ENCODE measurements at regions of chr6 and their contacts with region 1.

Region 1: DNA sequence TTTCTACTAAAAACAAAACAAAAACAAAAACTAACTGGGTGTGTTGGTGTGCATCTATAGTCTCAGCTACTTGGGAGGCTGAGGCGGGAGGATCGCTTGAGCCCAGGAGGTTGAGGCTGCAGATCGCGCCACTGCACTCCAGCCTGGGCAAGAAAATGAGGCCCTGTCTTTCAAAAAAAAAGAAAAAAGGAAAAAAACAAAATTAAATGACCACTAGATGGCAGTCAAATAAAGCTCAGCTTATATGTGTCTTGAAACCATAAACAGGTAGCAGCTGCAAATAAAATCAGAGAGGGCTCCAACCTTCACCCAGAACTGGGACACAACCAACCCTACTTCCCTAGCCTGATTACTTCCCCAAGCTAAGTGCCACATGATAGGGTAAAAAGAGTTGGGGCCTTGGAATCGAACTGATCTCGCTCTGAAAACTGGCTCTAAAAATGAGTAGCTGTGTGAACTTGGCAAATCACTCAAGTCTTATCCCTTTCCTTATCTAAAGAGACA is 67.1 kb upstream of the ADGRF4 start:
- ATAC-seq: peak in 3 of 8 experiments; percentile 5 to 9 (median 7)
- H3K4me3 ChIP-seq: no peak overlapping the region
- H3K27ac ChIP-seq: no peak overlapping the region
- H3K4me1 ChIP-seq: no peaks in the 10 kb centered on the region

Region 2: GRCh38 chr6:47302043-47302442 is 329.3 kb before region 1 on chr6:
- in situ Hi-C with region 1: no loop called
- ATAC-seq: no peak
- H3K4me3 ChIP-seq: no peak overlapping the region
- H3K27ac ChIP-seq: no peak overlapping the region
- H3K4me1 ChIP-seq: peaks cover 5 to 7% of the 10 kb centered on the region in 2 donors

Region 3: DNA sequence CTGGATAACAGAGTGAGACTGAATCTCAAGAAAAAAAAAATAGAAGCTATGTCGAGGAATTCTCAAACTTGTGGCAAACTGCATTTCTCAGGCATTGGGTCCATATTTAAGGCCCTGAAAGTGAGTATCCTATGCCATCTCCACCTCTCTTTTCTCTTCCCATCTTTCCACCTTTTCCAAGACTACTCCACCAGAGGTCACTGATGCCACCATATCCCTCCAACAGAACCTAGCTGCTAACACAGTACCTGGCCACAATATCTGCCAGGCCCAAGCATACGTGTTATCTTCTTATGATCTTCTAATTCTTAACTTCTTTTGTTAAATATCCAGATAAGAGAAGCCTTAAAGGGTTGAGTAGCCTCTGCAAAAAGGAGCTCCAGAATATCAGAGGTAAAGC is 58.9 kb after region 1 on chr6:
- in situ Hi-C with region 1: no loop called
- ATAC-seq: no peak
- H3K4me3 ChIP-seq: no peak overlapping the region
- H3K27ac ChIP-seq: no peak overlapping the region
- H3K4me1 ChIP-seq: no peaks in the 10 kb centered on the region

Region 4: DNA sequence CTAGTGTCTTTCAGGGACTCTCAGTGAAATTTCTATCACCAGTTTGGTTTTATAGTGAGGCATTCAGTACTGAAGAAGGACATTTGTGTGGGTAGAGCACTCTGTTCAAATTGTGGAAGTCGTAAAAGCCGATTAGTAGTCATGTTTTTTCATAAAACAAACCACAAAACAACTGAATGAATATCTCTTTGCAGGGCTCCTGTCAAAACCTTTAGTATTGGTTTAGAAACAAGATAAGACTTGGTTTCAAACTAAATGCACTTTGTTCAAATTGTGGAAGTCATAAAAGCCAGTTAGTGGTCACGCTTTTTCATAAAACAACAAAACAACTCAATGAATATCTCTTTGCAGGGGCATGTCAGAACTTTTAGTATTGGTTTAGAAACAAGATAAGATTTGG is 90.9 kb after region 1 on chr6:
- in situ Hi-C with region 1: loop called in 1 of 9 experiments (anchors 10 kb)
- ATAC-seq: no peak
- H3K4me3 ChIP-seq: no peak overlapping the region
- H3K27ac ChIP-seq: no peak overlapping the region
- H3K4me1 ChIP-seq: no peaks in the 10 kb centered on the region